ENCODE measurements at regions of chr2 and their contacts with region 1.

Region 1: GRCh38 chr2:195559431-195559914 is 97.6 kb upstream of the SLC39A10 start:
- DNase-seq: peak; percentile 91
- H3K4me3 Mint-ChIP-seq: peak overlapping the region; percentile 63
- H3K27ac Mint-ChIP-seq: peak overlapping the region; percentile 92
- H3K4me1 Mint-ChIP-seq: peaks cover 61% of the 10 kb centered on the region
- H3K27me3 Mint-ChIP-seq: no peaks in the 10 kb centered on the region

Region 2: GRCh38 chr2:195364015-195364965 is 195.2 kb before region 1 on chr2:
- CTCF ChIA-PET with region 1: no interaction called
- POLR2A ChIA-PET with region 1: no interaction called
- intact Hi-C with region 1: loop called (anchors 10 kb)
- DNase-seq: no peak
- H3K4me3 Mint-ChIP-seq: no peak overlapping the region
- H3K27ac Mint-ChIP-seq: no peak overlapping the region
- H3K4me1 Mint-ChIP-seq: peaks cover 29% of the 10 kb centered on the region
- H3K27me3 Mint-ChIP-seq: no peaks in the 10 kb centered on the region

Region 3: DNA sequence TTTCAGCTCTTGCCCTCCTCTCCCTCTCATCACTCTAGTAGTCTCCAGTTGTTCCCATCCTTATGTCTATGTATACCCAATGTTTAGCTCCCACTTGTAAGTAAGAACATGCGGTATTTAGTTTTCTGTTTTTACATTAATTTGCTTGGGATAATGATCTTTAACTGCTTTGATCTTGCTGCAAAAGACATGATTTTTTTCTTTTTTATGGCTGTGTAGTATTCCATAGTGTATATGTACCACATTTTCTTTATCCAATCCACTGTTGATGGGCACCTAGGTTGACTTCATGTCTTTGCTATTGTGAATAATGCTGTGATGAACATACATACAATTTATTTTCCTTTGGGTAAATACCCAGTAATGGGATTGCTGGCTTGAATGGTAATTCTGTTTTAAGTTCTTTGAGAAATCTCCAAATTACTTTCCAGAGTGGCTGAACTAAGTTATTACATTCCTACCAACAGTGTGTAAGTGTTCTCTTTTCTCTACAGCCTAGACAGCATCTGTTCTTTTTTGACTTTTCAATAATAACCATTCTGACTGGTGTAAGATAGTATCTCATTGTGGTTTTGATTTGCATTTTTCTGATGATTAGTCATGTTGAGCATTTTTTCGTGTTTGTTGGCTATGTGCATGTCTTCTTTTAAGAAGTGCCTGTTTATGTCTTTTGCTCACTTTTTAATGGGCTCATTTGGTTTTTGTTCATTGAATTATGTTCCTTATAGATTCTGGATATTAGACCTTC is 82.1 kb before region 1 on chr2:
- CTCF ChIA-PET with region 1: no interaction called
- POLR2A ChIA-PET with region 1: no interaction called
- intact Hi-C with region 1: loop called (anchors 2 kb)
- DNase-seq: no peak
- H3K4me3 Mint-ChIP-seq: no peak overlapping the region
- H3K27ac Mint-ChIP-seq: peak overlapping the region; percentile 10
- H3K4me1 Mint-ChIP-seq: peaks cover 17% of the 10 kb centered on the region
- H3K27me3 Mint-ChIP-seq: no peaks in the 10 kb centered on the region

Region 4: DNA sequence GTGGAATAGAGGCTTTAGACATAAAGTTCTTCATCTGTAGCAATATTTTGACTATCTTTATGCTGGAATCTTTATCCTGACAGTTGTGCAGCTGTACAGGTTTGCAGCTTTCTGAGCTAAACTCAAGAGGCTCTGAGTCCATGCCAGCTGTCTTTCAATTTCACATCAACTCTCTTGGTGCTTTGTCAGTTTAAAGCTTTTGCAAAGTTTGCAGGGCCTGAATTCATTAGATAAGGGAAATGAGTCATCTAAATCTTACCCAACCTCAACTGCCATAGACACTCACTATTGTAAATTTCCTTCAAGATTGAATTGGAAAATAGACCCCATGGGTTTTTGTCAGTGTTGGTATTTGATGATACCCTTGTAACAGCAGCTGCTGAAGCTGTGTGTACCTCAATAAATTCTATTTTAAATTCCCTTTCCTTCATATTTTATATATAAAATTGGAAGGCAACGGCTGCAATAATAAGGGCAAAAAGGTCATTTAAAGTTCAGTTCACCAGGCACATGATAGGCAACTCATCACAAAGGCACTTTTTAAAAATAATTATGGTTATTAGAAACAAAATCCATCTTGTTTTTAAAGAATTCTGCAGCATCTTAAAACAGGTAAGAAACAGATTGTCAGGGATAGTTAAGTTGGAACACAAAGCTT is 72.4 kb before region 1 on chr2:
- CTCF ChIA-PET with region 1: no interaction called
- POLR2A ChIA-PET with region 1: interaction called, 3 read pairs
- intact Hi-C with region 1: loop called (anchors 1 kb)
- DNase-seq: no peak
- H3K4me3 Mint-ChIP-seq: no peak overlapping the region
- H3K27ac Mint-ChIP-seq: peak overlapping the region; percentile 57
- H3K4me1 Mint-ChIP-seq: peaks cover 22% of the 10 kb centered on the region
- H3K27me3 Mint-ChIP-seq: no peaks in the 10 kb centered on the region

Region 5: DNA sequence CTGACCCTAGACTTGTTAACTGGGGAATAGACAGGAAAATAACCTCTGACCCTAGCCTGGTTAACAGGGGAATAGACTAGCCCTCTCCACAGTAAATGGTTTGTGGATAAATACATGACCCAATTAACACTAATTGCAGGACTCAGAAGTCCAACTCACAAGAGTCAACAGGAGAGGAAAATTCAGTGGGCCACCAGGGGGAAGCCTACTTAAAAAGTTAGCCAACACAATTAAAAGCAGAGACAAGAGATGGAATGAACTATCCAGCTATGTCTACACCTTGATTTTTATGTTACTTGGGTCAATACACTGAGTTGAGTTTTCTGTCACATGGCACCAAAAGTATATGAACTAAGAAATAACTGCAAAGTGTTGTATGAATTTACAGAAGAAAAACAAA is 61.3 kb before region 1 on chr2:
- CTCF ChIA-PET with region 1: interaction called, 3 read pairs
- POLR2A ChIA-PET with region 1: interaction called, 5 read pairs
- intact Hi-C with region 1: loop called (anchors 2 kb)
- DNase-seq: peak; percentile 66
- H3K4me3 Mint-ChIP-seq: no peak overlapping the region
- H3K27ac Mint-ChIP-seq: no peak overlapping the region
- H3K4me1 Mint-ChIP-seq: peaks cover 32% of the 10 kb centered on the region
- H3K27me3 Mint-ChIP-seq: no peaks in the 10 kb centered on the region

Region 6: GRCh38 chr2:195543902-195544894 is 15.3 kb before region 1 on chr2:
- CTCF ChIA-PET with region 1: interaction called, 6 read pairs
- POLR2A ChIA-PET with region 1: interaction called, 76 read pairs
- intact Hi-C with region 1: loop called (anchors 1 kb)
- DNase-seq: peak; percentile 58
- H3K4me3 Mint-ChIP-seq: peak overlapping the region; percentile 23
- H3K27ac Mint-ChIP-seq: peak overlapping the region; percentile 91
- H3K4me1 Mint-ChIP-seq: peaks cover 57% of the 10 kb centered on the region
- H3K27me3 Mint-ChIP-seq: no peaks in the 10 kb centered on the region

Region 7: GRCh38 chr2:195575879-195576401 is 16.5 kb after region 1 on chr2:
- CTCF ChIA-PET with region 1: interaction called, 3 read pairs
- POLR2A ChIA-PET with region 1: interaction called, 5 read pairs
- intact Hi-C with region 1: loop called (anchors 1 kb)
- DNase-seq: no peak
- H3K4me3 Mint-ChIP-seq: no peak overlapping the region
- H3K27ac Mint-ChIP-seq: peak overlapping the region; percentile 64
- H3K4me1 Mint-ChIP-seq: peaks cover 68% of the 10 kb centered on the region
- H3K27me3 Mint-ChIP-seq: no peaks in the 10 kb centered on the region

Measured in activated CD4-positive, alpha-beta memory T cell treated with anti-CD3 and anti-CD28 coated beads for 36 hours (primary cell).